BJ (cell line): ENCODE measurements at regions of chr7 and their contacts with region 1.

Region 1: GRCh38 chr7:142568435-142569097 is 180.7 kb upstream of the PRSS1 start:
- DNase-seq: peak; percentile 67
- H3K4me3 ChIP-seq: no peak overlapping the region
- H3K27me3 ChIP-seq: no peaks in the 10 kb centered on the region
- CTCF ChIP-seq: no peak

Region 2: GRCh38 chr7:142391191-142391992 is 177.2 kb before region 1 on chr7:
- CTCF ChIA-PET with region 1: no interaction called
- POLR2A ChIA-PET with region 1: no interaction called
- DNase-seq: no peak
- H3K4me3 ChIP-seq: no peak overlapping the region
- H3K27me3 ChIP-seq: peaks cover 4% of the 10 kb centered on the region
- CTCF ChIP-seq: peak; percentile 38; the same call in 1 of the 2 replicates

Region 3: GRCh38 chr7:142557971-142558582 is 10.5 kb before region 1 on chr7:
- CTCF ChIA-PET with region 1: interaction called, 18 read pairs
- POLR2A ChIA-PET with region 1: no interaction called
- DNase-seq: no peak
- H3K4me3 ChIP-seq: no peak overlapping the region
- H3K27me3 ChIP-seq: no peaks in the 10 kb centered on the region
- CTCF ChIP-seq: peak; percentile 78

Region 4: GRCh38 chr7:142581346-142581745 is 12.8 kb after region 1 on chr7:
- CTCF ChIA-PET with region 1: interaction called, 13 read pairs
- POLR2A ChIA-PET with region 1: no interaction called
- DNase-seq: no peak
- H3K4me3 ChIP-seq: no peak overlapping the region
- H3K27me3 ChIP-seq: no peaks in the 10 kb centered on the region
- CTCF ChIP-seq: no peak